ENCODE measurements at regions of chr9 and their contacts with region 1.

Region 1: DNA sequence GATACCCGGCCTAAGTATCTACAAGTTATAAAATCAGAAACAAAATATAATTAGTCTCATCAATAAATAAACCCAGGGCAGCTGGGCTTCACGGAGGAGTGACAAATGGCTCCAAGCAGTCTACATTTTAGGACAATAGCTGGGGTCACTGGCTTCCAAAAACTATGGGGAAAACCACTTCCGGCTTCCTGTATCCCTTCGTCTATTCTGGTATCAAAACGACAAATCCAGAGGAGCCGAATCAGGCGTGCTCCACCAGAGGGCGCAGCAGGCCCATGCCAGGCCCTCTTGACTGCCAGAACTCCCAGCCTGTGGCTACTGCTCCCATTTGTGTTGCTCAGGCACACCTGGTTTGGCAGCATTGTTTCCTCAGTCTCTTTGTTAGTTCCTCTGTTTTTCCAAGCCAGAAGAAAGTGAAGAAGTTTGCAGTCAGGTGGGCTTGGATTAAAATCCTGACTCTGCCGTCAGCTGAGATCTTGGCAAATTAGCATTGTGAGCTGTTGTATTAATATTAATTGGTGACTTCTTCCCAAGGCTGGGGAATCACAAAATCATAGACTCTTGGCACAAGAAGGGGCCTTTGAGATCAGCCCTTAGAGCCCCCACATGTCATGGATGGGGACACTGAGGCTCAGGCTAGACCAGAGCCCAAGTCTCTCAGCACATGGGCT is 11.6 kb upstream of the RAB14 start:
- DNase-seq: peak; percentile 87
- ATAC-seq: peak; percentile 89
- H3K4me3 Mint-ChIP-seq: no peak overlapping the region
- H3K27ac Mint-ChIP-seq: no peak overlapping the region
- H3K4me1 Mint-ChIP-seq: peaks cover 7% of the 10 kb centered on the region
- H3K27me3 Mint-ChIP-seq: no peaks in the 10 kb centered on the region

Region 2: DNA sequence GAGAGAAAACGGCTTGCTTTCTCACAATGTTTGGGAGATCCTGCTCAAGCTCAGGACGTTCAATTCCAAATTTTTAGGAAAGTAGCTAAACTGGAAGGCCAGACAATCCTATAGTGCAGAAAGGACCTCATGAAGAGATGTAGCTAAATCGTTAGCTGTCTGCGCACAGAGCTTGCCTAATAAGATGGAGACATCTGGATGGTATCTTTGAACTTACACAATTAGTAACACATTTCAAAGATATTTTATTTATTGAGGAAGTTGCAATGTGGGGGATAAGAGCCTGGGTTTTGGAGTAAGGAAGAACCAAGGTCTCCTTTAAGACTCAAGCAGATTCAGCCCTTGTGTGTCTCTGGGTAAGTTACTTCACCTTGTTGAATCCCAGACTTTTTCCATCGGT is 17.0 kb after region 1 on chr9:
- CTCF ChIA-PET with region 1: interaction called, 39 read pairs
- POLR2A ChIA-PET with region 1: no interaction called
- intact Hi-C with region 1: no loop called
- DNase-seq: no peak
- ATAC-seq: no peak
- H3K4me3 Mint-ChIP-seq: no peak overlapping the region
- H3K27ac Mint-ChIP-seq: no peak overlapping the region
- H3K4me1 Mint-ChIP-seq: no peaks in the 10 kb centered on the region
- H3K27me3 Mint-ChIP-seq: no peaks in the 10 kb centered on the region

Region 3: GRCh38 chr9:121299467-121300234 is 86.4 kb after region 1 on chr9:
- CTCF ChIA-PET with region 1: interaction called, 3 read pairs
- POLR2A ChIA-PET with region 1: no interaction called
- intact Hi-C with region 1: loop called in 1 of 2 experiments (anchors 10 kb)
- DNase-seq: peak; percentile 40
- ATAC-seq: peak; percentile 71
- H3K4me3 Mint-ChIP-seq: peak overlapping the region; percentile 63
- H3K27ac Mint-ChIP-seq: no peak overlapping the region
- H3K4me1 Mint-ChIP-seq: peaks cover 12% of the 10 kb centered on the region
- H3K27me3 Mint-ChIP-seq: peaks cover 15% of the 10 kb centered on the region

Region 4: DNA sequence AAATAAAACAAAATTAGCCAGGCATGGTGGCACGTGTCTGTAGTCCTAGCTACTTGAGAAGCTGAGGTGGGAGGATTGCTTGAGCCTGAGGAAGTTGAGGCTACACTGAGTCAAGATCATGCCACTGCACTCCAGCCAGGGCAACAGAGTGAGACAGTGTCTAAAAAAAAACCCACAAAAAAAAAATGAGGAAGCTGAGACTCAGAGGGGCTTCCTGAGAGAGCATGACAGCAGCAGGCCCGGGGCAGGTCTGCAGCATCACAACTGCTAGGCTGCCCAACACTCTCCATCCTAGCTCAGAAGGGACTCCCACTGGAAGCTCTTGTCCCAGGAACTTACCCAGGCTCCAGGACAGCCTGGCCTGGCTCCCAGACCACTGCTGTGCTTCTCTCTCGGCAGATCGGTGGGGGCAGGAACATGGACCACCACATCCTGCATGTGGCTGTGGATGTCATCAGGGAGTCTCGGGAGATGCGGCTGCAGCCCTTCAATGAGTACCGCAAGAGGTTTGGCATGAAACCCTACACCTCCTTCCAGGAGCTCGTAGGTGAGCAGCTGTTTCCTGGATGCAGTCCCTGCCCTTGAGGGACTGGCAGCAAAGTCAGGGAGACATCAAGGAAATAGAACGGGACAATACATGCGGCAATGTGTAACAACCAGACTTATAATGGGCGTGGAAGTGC is 1176.7 kb after region 1 on chr9:
- CTCF ChIA-PET with region 1: no interaction called
- POLR2A ChIA-PET with region 1: no interaction called
- intact Hi-C with region 1: no loop called
- DNase-seq: no peak
- ATAC-seq: no peak
- H3K4me3 Mint-ChIP-seq: no peak overlapping the region
- H3K27ac Mint-ChIP-seq: no peak overlapping the region
- H3K4me1 Mint-ChIP-seq: no peaks in the 10 kb centered on the region
- H3K27me3 Mint-ChIP-seq: peaks cover 13% of the 10 kb centered on the region

Measured in activated CD4-positive, alpha-beta T cell treated with anti-CD3 and anti-CD28 coated beads for 36 hours (primary cell).